Activated CD4-positive, alpha-beta T cell treated with anti-CD3 and anti-CD28 coated beads for 36 hours (primary cell): ENCODE measurements at regions of chr20 and their contacts with region 1.

Region 1: GRCh38 chr20:2172305-2173175 is 70.9 kb downstream of the STK35 start:
- DNase-seq: peak; percentile 82
- ATAC-seq: peak; percentile 72
- H3K4me3 Mint-ChIP-seq: peak overlapping the region; percentile 2
- H3K27ac Mint-ChIP-seq: no peak overlapping the region
- H3K4me1 Mint-ChIP-seq: peaks cover 2% of the 10 kb centered on the region
- H3K27me3 Mint-ChIP-seq: peaks cover 11% of the 10 kb centered on the region

Region 2: DNA sequence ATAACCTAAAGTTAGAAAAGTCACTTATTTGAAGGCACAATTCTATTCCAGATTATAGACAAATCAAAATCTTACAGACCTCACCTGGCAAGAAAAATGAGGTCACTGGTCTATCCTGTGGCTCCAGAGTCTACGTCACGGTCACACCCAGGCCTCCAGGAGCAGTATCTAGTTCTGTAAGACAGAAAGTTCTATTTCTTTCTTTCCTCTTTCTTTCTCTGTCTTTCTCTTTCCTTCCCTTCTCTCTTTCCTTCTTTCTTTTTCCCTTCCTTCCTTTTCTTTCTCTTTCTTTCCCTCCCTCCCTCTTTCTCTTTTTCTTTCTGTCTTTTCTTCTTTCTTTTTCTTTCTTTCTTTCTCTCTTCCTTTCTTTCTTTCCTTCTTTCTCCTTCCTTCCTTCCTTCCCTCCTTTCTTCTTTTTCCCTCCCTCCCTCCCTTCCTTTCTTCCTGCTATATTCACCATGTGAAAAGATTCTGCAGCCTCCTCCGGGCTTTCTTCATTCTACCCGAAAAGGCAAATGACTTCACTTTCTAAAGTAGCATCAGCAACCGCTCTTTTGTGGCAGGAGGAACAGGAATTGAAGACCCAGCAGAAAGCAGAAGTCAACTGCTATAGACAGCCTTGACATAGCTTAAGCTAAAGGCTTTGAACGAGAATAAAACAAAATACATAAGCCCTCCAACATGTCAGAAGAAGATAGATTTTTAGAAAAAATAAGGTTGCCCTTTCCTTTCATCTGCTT is 431.1 kb before region 1 on chr20:
- CTCF ChIA-PET with region 1: no interaction called
- POLR2A ChIA-PET with region 1: no interaction called
- intact Hi-C with region 1: no loop called
- DNase-seq: no peak
- ATAC-seq: no peak
- H3K4me3 Mint-ChIP-seq: no peak overlapping the region
- H3K27ac Mint-ChIP-seq: no peak overlapping the region
- H3K4me1 Mint-ChIP-seq: peaks cover 2% of the 10 kb centered on the region
- H3K27me3 Mint-ChIP-seq: peaks cover 6% of the 10 kb centered on the region

Region 3: DNA sequence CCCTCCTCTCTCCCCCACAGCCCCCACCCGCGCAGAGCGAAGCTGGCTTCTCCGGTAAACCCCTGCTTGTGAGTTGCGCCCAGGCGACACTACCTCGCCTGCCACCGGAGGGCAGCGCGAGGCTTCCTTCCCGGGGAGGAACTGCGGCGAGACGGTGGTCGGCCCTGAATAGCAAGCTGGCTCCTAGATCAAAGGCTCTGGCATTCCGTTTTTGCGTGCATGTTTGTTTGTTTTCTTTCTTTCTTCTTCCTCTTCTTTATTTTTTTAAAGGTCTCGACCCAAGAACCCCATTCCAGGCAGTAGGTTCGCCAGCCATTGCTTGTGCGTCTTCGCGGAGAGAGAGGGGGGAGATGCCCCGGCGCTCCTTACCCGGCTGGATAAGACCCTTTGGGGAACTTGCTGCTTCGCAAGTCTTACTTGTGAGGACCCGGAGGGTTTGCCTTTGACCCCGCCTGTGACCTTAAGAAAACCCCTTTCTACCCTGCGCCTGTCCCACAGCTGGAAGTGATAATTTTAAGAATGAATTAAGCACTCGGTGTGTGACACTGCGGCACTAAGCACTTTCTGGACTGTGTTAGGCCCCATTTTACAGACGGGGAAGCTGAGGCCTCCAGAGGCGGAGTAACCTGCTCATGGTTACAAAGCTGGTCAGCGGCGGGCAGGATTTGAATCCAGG is 370.0 kb before region 1 on chr20:
- CTCF ChIA-PET with region 1: no interaction called
- POLR2A ChIA-PET with region 1: no interaction called
- intact Hi-C with region 1: loop called in 1 of 2 experiments (anchors 2 kb)
- DNase-seq: peak; percentile 74
- ATAC-seq: peak; percentile 79
- H3K4me3 Mint-ChIP-seq: peak overlapping the region; percentile 59
- H3K27ac Mint-ChIP-seq: no peak overlapping the region
- H3K4me1 Mint-ChIP-seq: peaks cover 7% of the 10 kb centered on the region
- H3K27me3 Mint-ChIP-seq: peaks cover 43% of the 10 kb centered on the region

Region 4: GRCh38 chr20:2005831-2006426 is 166.6 kb before region 1 on chr20:
- CTCF ChIA-PET with region 1: interaction called, 40 read pairs
- POLR2A ChIA-PET with region 1: no interaction called
- intact Hi-C with region 1: loop called (anchors 1 to 5 kb)
- DNase-seq: peak; percentile 83
- ATAC-seq: no peak
- H3K4me3 Mint-ChIP-seq: no peak overlapping the region
- H3K27ac Mint-ChIP-seq: no peak overlapping the region
- H3K4me1 Mint-ChIP-seq: no peaks in the 10 kb centered on the region
- H3K27me3 Mint-ChIP-seq: peaks cover 20% of the 10 kb centered on the region

Region 5: DNA sequence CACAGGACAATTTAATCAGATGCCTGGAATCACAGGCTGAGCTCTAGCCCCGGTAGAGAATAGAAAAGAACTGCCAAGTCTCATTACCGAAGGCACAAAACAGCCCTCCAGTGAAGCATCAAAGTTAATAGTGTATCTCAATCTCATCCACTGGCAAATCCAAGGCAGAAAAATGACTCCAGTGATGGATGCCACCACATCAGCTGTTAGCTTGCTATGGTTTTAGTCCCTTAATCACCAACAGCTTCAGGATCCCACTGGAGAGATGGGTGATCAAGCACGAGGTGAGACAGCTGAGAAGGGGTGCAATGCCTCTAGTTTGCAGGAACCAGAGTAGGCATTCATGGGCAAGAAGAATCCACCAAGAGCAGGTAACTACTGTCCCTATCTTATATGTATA is 10.8 kb after region 1 on chr20:
- CTCF ChIA-PET with region 1: interaction called, 12 read pairs
- POLR2A ChIA-PET with region 1: interaction called, 3 read pairs
- intact Hi-C with region 1: no loop called
- DNase-seq: no peak
- ATAC-seq: no peak
- H3K4me3 Mint-ChIP-seq: no peak overlapping the region
- H3K27ac Mint-ChIP-seq: no peak overlapping the region
- H3K4me1 Mint-ChIP-seq: no peaks in the 10 kb centered on the region
- H3K27me3 Mint-ChIP-seq: peaks cover 2% of the 10 kb centered on the region

Region 6: GRCh38 chr20:2206957-2207769 is 34.6 kb after region 1 on chr20:
- CTCF ChIA-PET with region 1: interaction called, 13 read pairs
- POLR2A ChIA-PET with region 1: no interaction called
- intact Hi-C with region 1: no loop called
- DNase-seq: peak; percentile 85
- ATAC-seq: peak; percentile 77
- H3K4me3 Mint-ChIP-seq: peak overlapping the region; percentile 67
- H3K27ac Mint-ChIP-seq: peak overlapping the region; percentile 24
- H3K4me1 Mint-ChIP-seq: peaks cover 9% of the 10 kb centered on the region
- H3K27me3 Mint-ChIP-seq: no peaks in the 10 kb centered on the region